ENCODE measurements at regions of chr3 and their contacts with region 1.

Region 1: DNA sequence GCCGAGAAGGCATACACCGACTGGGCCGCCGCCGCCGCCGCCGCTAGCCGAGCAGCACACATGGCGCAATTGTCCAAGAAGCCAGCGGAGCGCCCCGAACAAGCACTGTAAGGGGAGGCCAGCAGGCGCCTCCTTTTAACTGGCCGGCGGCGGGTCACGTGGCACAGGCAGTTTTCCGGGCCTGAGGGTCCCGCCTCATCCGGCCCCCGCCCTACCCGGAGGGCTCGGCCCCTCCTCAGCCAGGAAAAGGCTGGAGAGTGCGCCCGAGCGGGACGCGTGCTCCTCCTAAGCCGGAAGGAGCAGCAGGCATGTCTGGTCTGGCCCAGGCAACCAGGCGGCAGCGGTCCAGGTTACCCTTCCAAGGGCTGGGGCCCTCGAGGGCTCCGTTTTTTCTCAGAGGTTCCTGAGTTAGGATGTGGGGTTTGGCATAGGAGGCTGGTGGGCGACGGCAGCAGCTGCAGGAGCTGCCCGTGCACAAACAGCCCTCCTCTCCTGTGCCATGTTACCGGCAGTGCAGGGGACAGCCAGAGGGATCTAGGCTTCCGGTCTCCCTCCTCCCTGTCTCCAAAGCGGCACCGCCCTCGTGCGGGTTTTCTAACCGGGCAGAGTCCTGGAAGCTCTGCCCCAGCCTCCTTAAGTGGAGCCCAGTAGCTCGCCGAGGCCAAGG is at the start of gene GPX1:
- DNase-seq: peak; percentile 77 to 93
- ATAC-seq: peak; percentile 91 to 93
- H3K4me3 ChIP-seq: peak within 1 kb of the TSS; percentile 67
- H3K27ac ChIP-seq: peak within 1 kb of the TSS; percentile 87 to 99
- H3K4me1 ChIP-seq: peaks cover 18% of the 10 kb centered on the region; the same call in 2 of the 3 replicates
- CTCF ChIP-seq: no peak
- EP300 ChIP-seq: no peak
- POLR2A ChIP-seq: peak; percentile 57
- RAD21 ChIP-seq: no peak
- polyA plus RNA-seq, gene GPX1: 150 and 157 TPM in 2 replicates

Region 2: DNA sequence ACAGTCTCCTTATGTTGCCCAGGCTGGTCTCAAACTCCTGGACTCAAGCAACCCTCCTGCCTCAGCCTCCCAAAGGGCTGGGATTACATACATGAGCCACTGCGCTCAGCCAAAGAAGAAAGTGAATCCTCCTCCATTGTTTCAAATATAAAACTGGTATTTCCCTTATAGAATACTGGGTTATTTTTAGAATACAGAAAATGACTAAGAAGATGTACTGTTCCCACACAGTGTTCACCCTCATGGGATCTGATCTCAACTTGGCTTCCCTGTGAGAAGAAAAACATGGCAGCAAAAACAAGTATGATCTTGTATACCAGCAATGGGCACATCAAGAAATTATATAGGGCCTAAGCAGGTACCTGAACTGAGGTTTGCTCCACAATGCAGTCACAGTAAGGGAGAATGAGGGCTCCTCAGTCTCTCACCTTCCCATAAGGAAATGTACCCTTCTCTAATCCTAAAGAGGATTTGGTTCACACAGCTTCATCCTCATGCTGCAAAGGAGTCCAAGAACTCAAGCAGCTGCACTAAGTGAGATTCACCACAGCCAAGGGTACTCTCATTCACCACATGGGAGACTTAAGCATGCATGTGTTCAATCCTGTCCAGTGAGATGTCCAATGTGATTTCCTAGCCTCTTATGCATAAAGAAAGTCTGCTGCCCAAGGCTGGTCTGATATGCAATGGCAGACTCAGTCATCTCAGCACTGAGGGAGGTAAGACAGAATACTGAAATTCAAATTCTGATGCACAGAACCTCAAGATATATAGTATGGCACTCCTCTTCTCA is 44.3 kb before region 1 on chr3:
- CTCF ChIA-PET with region 1: no interaction called
- POLR2A ChIA-PET with region 1: no interaction called
- DNase-seq: no peak
- ATAC-seq: no peak
- H3K4me3 ChIP-seq: no peak overlapping the region
- H3K27ac ChIP-seq: no peak overlapping the region
- H3K4me1 ChIP-seq: no peaks in the 10 kb centered on the region
- CTCF ChIP-seq: no peak
- EP300 ChIP-seq: no peak
- POLR2A ChIP-seq: no peak
- RAD21 ChIP-seq: no peak

Region 3: GRCh38 chr3:49346797-49347251 is 11.5 kb before region 1 on chr3:
- CTCF ChIA-PET with region 1: no interaction called
- POLR2A ChIA-PET with region 1: no interaction called
- DNase-seq: no peak
- ATAC-seq: no peak
- H3K4me3 ChIP-seq: no peak overlapping the region
- H3K27ac ChIP-seq: peak overlapping the region in 1 of 2 experiments; percentile 34; a peak in 1 of 6 replicates
- H3K4me1 ChIP-seq: peaks cover 26% of the 10 kb centered on the region
- CTCF ChIP-seq: no peak
- EP300 ChIP-seq: no peak
- POLR2A ChIP-seq: no peak
- RAD21 ChIP-seq: no peak

Region 4: GRCh38 chr3:49411968-49412631 is 53.8 kb after region 1 on chr3 and contains the starts of genes RHOA and TCTA:
- CTCF ChIA-PET with region 1: no interaction called
- POLR2A ChIA-PET with region 1: interaction called, 17 read pairs
- DNase-seq: peak; percentile 95 to 100
- ATAC-seq: peak; percentile 87 to 92
- H3K4me3 ChIP-seq: peak within 1 kb of the TSS; percentile 98
- H3K27ac ChIP-seq: peak within 1 kb of the TSS; percentile 98 to 99
- H3K4me1 ChIP-seq: peaks cover 37% of the 10 kb centered on the region
- CTCF ChIP-seq: no peak
- EP300 ChIP-seq: no peak
- POLR2A ChIP-seq: peak; percentile 89
- RAD21 ChIP-seq: no peak
- polyA plus RNA-seq, gene RHOA: 332 and 343 TPM in 2 replicates
- polyA plus RNA-seq, gene TCTA: 14.8 and 19.9 TPM in 2 replicates